ENCODE measurements at regions of chr11 and their contacts with region 1.

Region 1: DNA sequence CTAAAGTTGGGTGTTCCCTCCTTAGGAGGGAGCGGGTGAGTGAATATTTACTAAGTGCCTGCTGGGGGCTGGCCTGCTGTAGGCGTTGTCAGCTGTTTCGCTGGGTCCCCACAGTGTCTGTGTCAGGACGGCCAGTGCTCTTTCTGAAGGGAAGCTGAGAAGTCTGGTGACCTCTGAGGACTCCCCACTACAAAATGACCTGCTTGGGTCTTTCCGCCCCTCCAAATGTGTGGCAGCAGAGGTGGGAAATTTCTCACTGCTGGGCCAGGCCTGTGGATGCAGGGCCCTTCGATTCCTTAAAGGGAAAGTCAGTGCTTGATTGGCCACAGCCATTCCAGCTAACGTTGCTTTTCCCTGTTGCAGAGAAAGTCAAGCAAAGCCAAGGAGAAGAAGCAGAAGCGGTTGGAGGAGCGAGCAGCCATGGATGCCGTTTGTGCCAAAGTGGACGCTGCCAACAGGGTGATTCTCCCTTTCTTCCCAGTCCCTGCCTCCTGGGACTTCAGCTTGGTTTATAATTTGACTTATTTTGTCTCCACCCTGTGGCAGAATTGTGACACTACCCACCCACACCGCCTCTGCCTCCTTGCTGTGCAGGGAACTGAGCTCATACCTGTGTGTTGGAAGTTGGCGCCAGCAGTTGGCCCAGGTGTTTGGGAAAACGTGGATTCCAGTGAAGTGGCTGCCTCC is 6.8 kb downstream of the NAA40 start:
- DNase-seq: peak; percentile 68
- CTCF ChIP-seq: peak; percentile 51

Region 2: GRCh38 chr11:63838678-63839507 is 106.7 kb before region 1 on chr11 and contains the start of gene MARK2:
- in situ Hi-C with region 1: loop called (anchors 10 kb)
- DNase-seq: peak; percentile 98
- CTCF ChIP-seq: no peak